ENCODE measurements at regions of chr2 and their contacts with region 1.

Region 1: DNA sequence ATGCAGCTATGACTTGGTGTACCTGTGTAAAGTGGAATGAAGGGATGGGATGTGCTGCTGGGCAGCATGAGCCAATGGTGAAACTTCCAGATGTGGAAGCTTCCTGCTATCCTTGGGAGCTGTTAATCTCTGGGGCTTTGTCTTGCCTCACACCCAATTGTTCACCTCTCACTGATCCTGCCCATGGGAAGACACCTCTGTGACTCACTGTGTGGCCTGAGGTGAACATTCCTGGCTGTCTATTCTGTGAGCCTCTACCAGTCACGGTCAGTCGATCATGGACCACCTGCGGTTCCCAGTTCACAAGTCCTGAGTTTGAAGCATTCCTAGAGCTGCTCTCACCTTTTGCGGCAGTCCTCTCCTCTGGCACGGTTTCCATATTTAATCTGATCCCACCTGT is 12.1 kb downstream of the NEURL3 start:
- DNase-seq: peak; percentile 82
- ATAC-seq: peak; percentile 99
- H3K4me3 ChIP-seq: peak overlapping the region in 1 of 2 experiments; percentile 12; a peak in 1 of 4 replicates
- H3K27ac ChIP-seq: no peak overlapping the region
- H3K4me1 ChIP-seq: peaks cover 16 to 22% of the 10 kb centered on the region in 2 experiments
- H3K27me3 ChIP-seq: no peaks in the 10 kb centered on the region
- CTCF ChIP-seq: no peak
- POLR2A ChIP-seq: no peak
- RAD21 ChIP-seq: peak; percentile 23; the same call in 1 of the 2 replicates

Region 2: GRCh38 chr2:96407041-96407918 is 85.8 kb before region 1 on chr2:
- CTCF ChIA-PET with region 1: interaction called, 5 read pairs
- POLR2A ChIA-PET with region 1: no interaction called
- RAD21 ChIA-PET with region 1: interaction called in 1 of 2 experiments, 6 read pairs
- intact Hi-C with region 1: loop called (anchors 5 kb)
- DNase-seq: peak; percentile 72
- ATAC-seq: peak; percentile 91
- H3K4me3 ChIP-seq: no peak overlapping the region
- H3K27ac ChIP-seq: no peak overlapping the region
- H3K4me1 ChIP-seq: peaks cover 0 to 27% of the 10 kb centered on the region in 2 experiments; a peak in 2 of 4 replicates
- H3K27me3 ChIP-seq: no peaks in the 10 kb centered on the region
- CTCF ChIP-seq: peak; percentile 82 to 94 (median 86)
- POLR2A ChIP-seq: no peak
- RAD21 ChIP-seq: peak; percentile 88

Region 3: GRCh38 chr2:96656540-96656939 is 163.5 kb after region 1 on chr2:
- CTCF ChIA-PET with region 1: no interaction called
- POLR2A ChIA-PET with region 1: no interaction called
- RAD21 ChIA-PET with region 1: no interaction called
- intact Hi-C with region 1: no loop called
- DNase-seq: no peak
- ATAC-seq: no peak
- H3K4me3 ChIP-seq: no peak overlapping the region
- H3K27ac ChIP-seq: no peak overlapping the region
- H3K4me1 ChIP-seq: no peaks in the 10 kb centered on the region
- H3K27me3 ChIP-seq: no peaks in the 10 kb centered on the region
- CTCF ChIP-seq: no peak
- POLR2A ChIP-seq: no peak
- RAD21 ChIP-seq: no peak

Measured in HCT116 (cell line).